Activated CD8-positive, alpha-beta T cell treated with anti-CD3 and anti-CD28 coated beads, Interleukin-2, amount 10 ng/mL, durations not matched to agents 7 days and 5 days (primary cell): ENCODE measurements at regions of chr11 and their contacts with region 1.

Region 1: GRCh38 chr11:85694386-85694980 is 8.5 kb upstream of the CCDC89 start:
- DNase-seq: peak; percentile 48
- ATAC-seq: no peak
- H3K4me3 Mint-ChIP-seq: no peak overlapping the region
- H3K27ac Mint-ChIP-seq: no peak overlapping the region
- H3K4me1 Mint-ChIP-seq: peaks cover 43% of the 10 kb centered on the region
- H3K27me3 Mint-ChIP-seq: peaks cover 2% of the 10 kb centered on the region

Region 2: DNA sequence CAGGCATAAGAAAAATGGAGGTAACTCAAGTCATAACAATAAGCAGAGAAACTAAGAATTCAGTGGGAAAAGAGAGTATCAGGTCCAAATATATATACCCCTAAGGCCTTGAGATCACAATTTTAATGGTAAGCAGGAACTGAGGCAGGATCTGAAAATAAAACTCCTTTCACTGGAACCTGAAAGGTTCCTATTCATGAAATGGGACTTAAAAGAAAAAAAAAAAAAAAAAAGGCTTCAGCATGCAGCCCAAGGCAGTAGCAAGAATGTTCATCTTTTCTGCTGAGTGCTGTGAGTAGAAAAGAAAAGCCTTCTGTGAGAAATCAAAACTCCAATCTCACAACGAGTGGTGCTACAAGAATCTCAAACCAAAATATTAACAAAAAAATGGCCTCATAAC is 142.6 kb before region 1 on chr11:
- CTCF ChIA-PET with region 1: no interaction called
- POLR2A ChIA-PET with region 1: no interaction called
- DNase-seq: no peak
- ATAC-seq: no peak
- H3K4me3 Mint-ChIP-seq: no peak overlapping the region
- H3K27ac Mint-ChIP-seq: no peak overlapping the region
- H3K4me1 Mint-ChIP-seq: no peaks in the 10 kb centered on the region
- H3K27me3 Mint-ChIP-seq: no peaks in the 10 kb centered on the region

Region 3: GRCh38 chr11:85682330-85683305 is 11.9 kb before region 1 on chr11:
- CTCF ChIA-PET with region 1: interaction called, 14 read pairs
- POLR2A ChIA-PET with region 1: interaction called, 3 read pairs
- DNase-seq: peak; percentile 72
- ATAC-seq: peak; percentile 93
- H3K4me3 Mint-ChIP-seq: peak overlapping the region; percentile 74
- H3K27ac Mint-ChIP-seq: peak overlapping the region; percentile 78
- H3K4me1 Mint-ChIP-seq: peaks cover 19% of the 10 kb centered on the region
- H3K27me3 Mint-ChIP-seq: peaks cover 13% of the 10 kb centered on the region

Region 4: DNA sequence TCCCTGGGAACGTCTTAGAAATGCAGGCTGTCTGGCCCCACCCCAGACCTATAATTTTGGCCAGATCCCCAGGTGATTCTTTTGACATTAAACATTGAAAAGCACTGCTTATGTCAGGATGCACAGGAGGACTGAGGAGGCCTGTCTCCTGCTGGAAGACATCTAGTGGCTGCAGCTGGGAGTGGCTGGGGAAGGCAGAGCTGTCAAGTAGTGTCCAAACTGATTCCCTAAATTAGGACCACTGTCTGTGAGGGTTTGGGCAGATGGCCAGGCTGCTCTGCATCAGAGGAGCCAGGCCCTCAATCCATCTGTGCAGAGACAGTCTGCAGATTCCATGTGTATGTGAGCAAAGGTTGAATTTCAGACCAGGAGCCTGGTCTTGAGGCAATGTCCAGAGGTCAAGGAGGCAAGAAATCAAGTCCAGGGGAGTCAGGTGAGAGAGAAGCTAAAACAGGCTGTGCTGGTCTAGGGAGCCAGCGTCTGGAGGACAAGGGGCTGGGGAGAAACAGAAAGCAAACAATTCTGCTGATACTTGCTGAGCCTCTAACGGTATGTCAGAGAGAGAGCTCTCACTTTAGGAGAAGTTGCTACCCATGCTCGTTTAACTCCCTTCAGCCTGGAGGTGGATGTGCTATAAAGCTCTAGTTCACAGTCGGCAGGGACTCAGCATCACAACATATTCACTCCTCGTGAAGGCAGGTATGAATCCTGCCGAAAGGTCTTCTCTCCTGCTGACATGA is 131.8 kb after region 1 on chr11:
- CTCF ChIA-PET with region 1: interaction called, 14 read pairs
- POLR2A ChIA-PET with region 1: no interaction called
- DNase-seq: peak; percentile 42
- ATAC-seq: no peak
- H3K4me3 Mint-ChIP-seq: no peak overlapping the region
- H3K27ac Mint-ChIP-seq: peak overlapping the region; percentile 37
- H3K4me1 Mint-ChIP-seq: peaks cover 58% of the 10 kb centered on the region
- H3K27me3 Mint-ChIP-seq: peaks cover 3% of the 10 kb centered on the region